Prostate gland (tissue), 2 donors: ENCODE measurements at regions of chr17 and their contacts with region 1.

Region 1: GRCh38 chr17:35063514-35064223 is at the start of gene RFFL:
- DNase-seq: peak; percentile 96
- H3K4me3 ChIP-seq: peak within 1 kb of the TSS; percentile 7 to 14
- H3K27ac ChIP-seq: peak within 1 kb of the TSS; percentile 77 to 79
- H3K4me1 ChIP-seq: peaks cover 12% of the 10 kb centered on the region
- H3K27me3 ChIP-seq: no peaks in the 10 kb centered on the region
- CTCF ChIP-seq: peak in 3 of 4 experiments; percentile 19 to 61 (median 34)
- POLR2A ChIP-seq: no peak
- total RNA-seq, gene RFFL: 46.6 to 51.3 TPM

Region 2: DNA sequence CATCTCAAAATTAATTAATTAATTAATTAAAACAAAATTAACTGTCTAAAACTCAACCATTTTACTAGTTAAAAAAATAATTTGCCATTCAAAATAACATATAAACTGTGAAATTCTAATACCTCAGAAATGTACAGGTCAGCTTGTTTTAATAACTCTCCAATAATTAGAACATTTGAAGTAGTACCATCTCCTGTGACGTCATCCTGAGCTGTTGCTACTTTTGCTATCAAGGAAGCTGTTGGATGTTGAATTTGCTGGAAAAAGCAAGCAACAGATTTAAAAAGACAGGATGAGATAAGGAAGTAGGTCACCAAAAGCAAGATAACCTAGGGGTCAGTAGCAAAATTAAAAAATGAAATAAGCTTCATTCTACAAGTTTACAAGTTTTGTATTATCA is 105.2 kb before region 1 on chr17:
- intact Hi-C with region 1: no loop called
- DNase-seq: no peak
- H3K4me3 ChIP-seq: no peak overlapping the region
- H3K27ac ChIP-seq: no peak overlapping the region
- H3K4me1 ChIP-seq: no peaks in the 10 kb centered on the region
- H3K27me3 ChIP-seq: no peaks in the 10 kb centered on the region
- CTCF ChIP-seq: no peak
- POLR2A ChIP-seq: no peak

Region 3: GRCh38 chr17:34980681-34981537 is 82.8 kb before region 1 on chr17:
- intact Hi-C with region 1: loop called (anchors 1 kb)
- DNase-seq: peak; percentile 76
- H3K4me3 ChIP-seq: peak overlapping the region; percentile 85 to 91
- H3K27ac ChIP-seq: peak overlapping the region; percentile 99 to 100
- H3K4me1 ChIP-seq: no peaks in the 10 kb centered on the region
- H3K27me3 ChIP-seq: no peaks in the 10 kb centered on the region
- CTCF ChIP-seq: peak in 3 of 4 experiments; percentile 14 to 48 (median 47)
- POLR2A ChIP-seq: no peak

Region 4: GRCh38 chr17:35022536-35023063 is 41.1 kb before region 1 on chr17:
- intact Hi-C with region 1: loop called (anchors 5 kb)
- DNase-seq: peak; percentile 83
- H3K4me3 ChIP-seq: no peak overlapping the region
- H3K27ac ChIP-seq: peak overlapping the region; percentile 62 to 70
- H3K4me1 ChIP-seq: peaks cover 9% of the 10 kb centered on the region
- H3K27me3 ChIP-seq: no peaks in the 10 kb centered on the region
- CTCF ChIP-seq: no peak
- POLR2A ChIP-seq: no peak